Gastrocnemius medialis (tissue), 4 donors: ENCODE measurements at regions of chr12 and their contacts with region 1.

Region 1: GRCh38 chr12:50986966-50987737 is 34.8 kb downstream of the HIGD1C start:
- DNase-seq: peak; percentile 49 to 53
- ATAC-seq: peak; percentile 62 to 74
- H3K4me3 ChIP-seq: no peak overlapping the region
- H3K27ac ChIP-seq: peak overlapping the region; percentile 80 to 91 (median 87)
- H3K4me1 ChIP-seq: peaks cover 29 to 51% of the 10 kb centered on the region in 2 donors
- H3K27me3 ChIP-seq: no peaks in the 10 kb centered on the region
- CTCF ChIP-seq: peak; percentile 31 to 73 (median 39)
- POLR2A ChIP-seq: no peak

Region 2: DNA sequence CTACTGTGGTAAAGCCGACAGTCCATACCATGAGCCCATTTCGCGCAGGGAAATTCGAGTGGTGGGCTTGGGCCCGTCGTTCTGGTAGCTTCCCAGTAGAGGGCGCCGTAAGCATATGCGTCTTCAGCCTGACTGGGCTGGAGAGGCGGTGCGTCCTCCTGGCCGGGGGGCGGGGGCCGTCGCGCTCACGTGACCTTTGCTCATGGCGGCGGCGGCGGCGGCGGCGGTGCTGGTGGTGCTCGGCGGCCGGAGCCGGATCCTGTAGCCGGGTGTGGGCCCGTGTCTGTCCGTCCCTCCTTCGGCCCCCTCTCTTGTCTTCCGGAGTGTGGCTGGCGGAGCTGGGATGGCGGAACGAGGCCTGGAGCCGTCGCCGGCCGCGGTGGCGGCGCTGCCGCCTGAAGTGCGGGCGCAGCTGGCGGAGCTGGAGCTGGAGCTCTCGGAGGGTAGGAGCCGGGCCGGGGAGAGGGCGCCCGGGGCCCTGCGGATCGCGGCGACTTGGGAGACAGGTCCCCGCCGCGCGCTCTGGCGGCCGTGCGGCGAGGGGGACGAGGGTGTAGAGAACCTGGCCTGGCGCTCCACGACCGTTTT is 482.3 kb before region 1 on chr12 and contains the start of gene DIP2B:
- in situ Hi-C with region 1: no loop called
- intact Hi-C with region 1: loop called (anchors 10 kb)
- DNase-seq: peak; percentile 92 to 93
- ATAC-seq: peak; percentile 84 to 88
- H3K4me3 ChIP-seq: peak within 1 kb of the TSS; percentile 64 to 92 (median 82)
- H3K27ac ChIP-seq: peak within 1 kb of the TSS; percentile 90 to 97 (median 93)
- H3K4me1 ChIP-seq: peaks cover 39 to 47% of the 10 kb centered on the region in 2 donors
- H3K27me3 ChIP-seq: no peaks in the 10 kb centered on the region
- CTCF ChIP-seq: peak; percentile 85 to 98 (median 96)
- POLR2A ChIP-seq: peak; percentile 49 to 79
- total RNA-seq, gene DIP2B: 11.5 to 15.2 (median 12.2) TPM

Region 3: DNA sequence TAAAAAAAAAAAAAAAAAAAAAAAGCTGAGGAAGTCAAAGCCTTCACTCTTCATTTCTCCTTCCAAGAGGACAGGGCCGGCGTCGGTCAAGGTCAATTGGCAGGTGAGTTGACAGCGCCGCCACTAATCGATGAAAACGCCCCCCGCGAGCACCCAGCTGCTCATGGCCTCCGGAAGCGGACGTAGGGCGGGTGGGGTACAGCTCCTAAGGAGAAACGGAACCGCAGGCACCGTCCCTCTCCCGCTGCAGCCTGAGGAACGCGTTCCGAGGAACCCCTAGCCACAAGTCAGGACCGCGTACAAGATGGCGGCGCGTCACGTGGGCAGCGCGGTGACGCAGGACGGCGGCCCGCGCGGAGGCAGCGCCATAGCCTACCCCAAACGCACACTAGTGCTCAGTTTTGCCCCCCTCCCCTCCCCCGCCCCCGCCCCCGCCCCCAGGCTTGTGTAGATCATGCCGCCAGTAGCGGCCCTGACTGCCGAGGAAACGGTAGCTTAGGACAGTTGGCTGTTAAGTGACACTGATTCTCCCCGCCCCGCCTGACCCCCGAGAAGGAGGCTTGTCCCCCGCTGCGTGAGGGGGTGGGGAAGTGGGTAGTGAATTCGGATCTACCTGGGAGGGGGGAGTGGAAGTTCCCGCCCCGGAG is 223.4 kb before region 1 on chr12 and contains the start of gene ATF1:
- in situ Hi-C with region 1: loop called in 1 of 4 experiments (anchors 5 kb)
- intact Hi-C with region 1: loop called (anchors 2 kb)
- DNase-seq: peak; percentile 82 to 93
- ATAC-seq: peak; percentile 75 to 80
- H3K4me3 ChIP-seq: peak within 1 kb of the TSS; percentile 92 to 99 (median 98)
- H3K27ac ChIP-seq: peak within 1 kb of the TSS; percentile 97 to 100 (median 99)
- H3K4me1 ChIP-seq: peaks cover 28 to 42% of the 10 kb centered on the region in 2 donors
- H3K27me3 ChIP-seq: no peaks in the 10 kb centered on the region
- CTCF ChIP-seq: peak in 1 of 5 experiments; percentile 22
- POLR2A ChIP-seq: peak; percentile 83 to 90
- total RNA-seq, gene ATF1: 16.4 to 44.5 (median 37.5) TPM

Region 4: GRCh38 chr12:50825372-50825838 is 161.7 kb before region 1 on chr12:
- in situ Hi-C with region 1: loop called (anchors 5 to 10 kb)
- intact Hi-C with region 1: loop called (anchors 1 kb)
- DNase-seq: no peak
- ATAC-seq: peak; percentile 83 to 86
- H3K4me3 ChIP-seq: no peak overlapping the region
- H3K27ac ChIP-seq: peak overlapping the region; percentile 62 to 74 (median 70)
- H3K4me1 ChIP-seq: peaks cover 0 to 14% of the 10 kb centered on the region in 2 donors
- H3K27me3 ChIP-seq: no peaks in the 10 kb centered on the region
- CTCF ChIP-seq: peak; percentile 53 to 86 (median 66)
- POLR2A ChIP-seq: no peak

Region 5: GRCh38 chr12:50924439-50925341 is 62.5 kb before region 1 on chr12:
- in situ Hi-C with region 1: loop called in 1 of 4 experiments (anchors 5 kb)
- intact Hi-C with region 1: loop called (anchors 1 kb)
- DNase-seq: peak; percentile 96 to 97
- ATAC-seq: peak; percentile 85 to 91
- H3K4me3 ChIP-seq: peak overlapping the region; percentile 64 to 89 (median 79)
- H3K27ac ChIP-seq: peak overlapping the region; percentile 83 to 91 (median 87)
- H3K4me1 ChIP-seq: peaks cover 35 to 41% of the 10 kb centered on the region in 2 donors
- H3K27me3 ChIP-seq: no peaks in the 10 kb centered on the region
- CTCF ChIP-seq: no peak
- POLR2A ChIP-seq: peak; percentile 32 to 85

Region 6: GRCh38 chr12:50933459-50934124 is 53.6 kb before region 1 on chr12:
- in situ Hi-C with region 1: loop called in 1 of 4 experiments (anchors 5 kb)
- intact Hi-C with region 1: loop called (anchors 2 kb)
- DNase-seq: no peak
- ATAC-seq: no peak
- H3K4me3 ChIP-seq: no peak overlapping the region
- H3K27ac ChIP-seq: peak overlapping the region; percentile 83 to 91 (median 87)
- H3K4me1 ChIP-seq: peaks cover 59 to 69% of the 10 kb centered on the region in 2 donors
- H3K27me3 ChIP-seq: no peaks in the 10 kb centered on the region
- CTCF ChIP-seq: no peak
- POLR2A ChIP-seq: no peak

Region 7: GRCh38 chr12:51025836-51026638 is 38.9 kb after region 1 on chr12 and contains the start of gene SLC11A2:
- in situ Hi-C with region 1: no loop called
- intact Hi-C with region 1: loop called (anchors 2 kb)
- DNase-seq: peak; percentile 97 to 98
- ATAC-seq: peak; percentile 74
- H3K4me3 ChIP-seq: peak within 1 kb of the TSS; percentile 72 to 97 (median 90)
- H3K27ac ChIP-seq: peak within 1 kb of the TSS; percentile 93 to 100 (median 97)
- H3K4me1 ChIP-seq: peaks cover 27 to 33% of the 10 kb centered on the region in 2 donors
- H3K27me3 ChIP-seq: no peaks in the 10 kb centered on the region
- CTCF ChIP-seq: peak in 2 of 5 experiments; percentile 6 to 27
- POLR2A ChIP-seq: peak; percentile 79 to 88
- total RNA-seq, gene SLC11A2: 24.0 to 65.4 (median 47.0) TPM

Region 8: DNA sequence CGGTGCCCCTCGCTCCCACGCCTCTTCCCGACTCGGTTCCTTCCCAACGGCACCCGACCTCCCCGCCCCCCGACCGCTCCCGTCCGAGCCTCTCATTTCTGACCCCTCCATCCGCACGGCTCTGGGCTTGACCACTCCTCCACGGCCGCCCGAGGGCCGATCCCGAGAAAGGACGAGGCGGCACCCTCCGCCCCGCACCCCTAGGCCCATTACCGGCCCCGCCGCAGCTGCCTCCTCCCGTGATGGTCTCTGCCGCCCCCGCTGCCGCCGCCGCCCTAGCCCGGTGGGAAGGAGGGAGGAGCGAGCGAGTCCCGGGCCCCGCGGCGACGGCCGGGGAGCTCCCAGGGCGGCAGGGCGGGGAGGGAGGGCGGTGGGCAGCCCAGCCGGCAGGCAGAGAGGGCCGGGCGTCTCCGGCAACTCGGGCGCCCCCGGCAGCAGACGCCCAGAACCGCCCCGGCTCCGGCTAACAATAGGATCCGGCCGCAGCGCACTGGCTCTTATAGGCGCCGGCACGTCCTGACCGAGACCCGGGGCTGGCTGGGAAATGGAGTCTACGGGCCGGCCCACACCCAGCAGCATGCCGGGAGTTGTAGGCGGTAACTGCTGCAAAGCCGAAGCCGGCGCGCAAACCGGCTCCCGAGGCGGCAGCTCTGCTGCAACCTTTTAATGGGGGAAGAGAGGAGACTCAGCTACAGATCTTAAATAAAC is 96.1 kb after region 1 on chr12 and contains the start of gene CSRNP2:
- in situ Hi-C with region 1: no loop called
- intact Hi-C with region 1: no loop called
- DNase-seq: peak; percentile 96
- ATAC-seq: peak; percentile 94 to 96
- H3K4me3 ChIP-seq: peak within 1 kb of the TSS; percentile 91 to 98 (median 94)
- H3K27ac ChIP-seq: peak within 1 kb of the TSS; percentile 87 to 97 (median 94)
- H3K4me1 ChIP-seq: peaks cover 17 to 28% of the 10 kb centered on the region in 2 donors
- H3K27me3 ChIP-seq: no peaks in the 10 kb centered on the region
- CTCF ChIP-seq: peak in 1 of 5 experiments; percentile 12
- POLR2A ChIP-seq: peak; percentile 100
- total RNA-seq, gene CSRNP2: 17.3 to 29.5 (median 22.0) TPM

Region 9: DNA sequence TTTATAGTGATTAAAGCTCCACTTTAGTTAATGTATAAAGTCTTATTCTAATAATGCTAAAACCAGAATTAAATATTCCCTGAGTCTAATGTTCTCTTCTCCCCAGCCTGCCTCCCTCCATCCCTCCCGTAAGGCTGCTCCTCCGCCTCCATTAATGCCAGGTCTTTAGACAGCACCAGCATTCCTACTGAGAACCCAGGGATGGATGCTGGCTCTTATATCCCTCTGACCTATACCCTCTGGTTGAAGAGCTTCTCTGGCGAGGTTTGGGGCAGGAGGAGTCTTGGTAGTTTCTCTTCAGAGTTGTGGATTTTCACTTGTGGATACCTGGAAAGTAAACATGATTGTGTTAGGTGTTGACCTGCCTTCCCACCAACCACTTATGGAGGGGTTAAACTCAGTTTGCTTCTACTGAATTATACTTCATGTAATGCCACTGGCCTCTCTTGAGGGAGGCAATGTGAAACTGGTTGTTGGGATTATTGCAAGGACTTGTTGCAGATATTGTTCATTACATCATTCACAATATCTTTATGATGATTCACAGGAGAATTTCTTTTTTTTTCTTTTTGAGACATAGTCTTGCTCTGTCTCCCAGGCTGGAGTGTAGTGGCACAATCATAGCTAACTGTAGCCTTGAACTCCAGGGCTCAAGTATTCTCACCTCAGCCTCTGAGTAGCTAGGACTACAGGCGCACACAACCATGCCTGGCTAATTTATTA is 294.2 kb after region 1 on chr12:
- in situ Hi-C with region 1: no loop called
- intact Hi-C with region 1: no loop called
- DNase-seq: no peak
- ATAC-seq: no peak
- H3K4me3 ChIP-seq: no peak overlapping the region
- H3K27ac ChIP-seq: no peak overlapping the region
- H3K4me1 ChIP-seq: no peaks in the 10 kb centered on the region
- H3K27me3 ChIP-seq: no peaks in the 10 kb centered on the region
- CTCF ChIP-seq: no peak
- POLR2A ChIP-seq: no peak